ENCODE measurements at regions of chr1 and their contacts with region 1.

Region 1: DNA sequence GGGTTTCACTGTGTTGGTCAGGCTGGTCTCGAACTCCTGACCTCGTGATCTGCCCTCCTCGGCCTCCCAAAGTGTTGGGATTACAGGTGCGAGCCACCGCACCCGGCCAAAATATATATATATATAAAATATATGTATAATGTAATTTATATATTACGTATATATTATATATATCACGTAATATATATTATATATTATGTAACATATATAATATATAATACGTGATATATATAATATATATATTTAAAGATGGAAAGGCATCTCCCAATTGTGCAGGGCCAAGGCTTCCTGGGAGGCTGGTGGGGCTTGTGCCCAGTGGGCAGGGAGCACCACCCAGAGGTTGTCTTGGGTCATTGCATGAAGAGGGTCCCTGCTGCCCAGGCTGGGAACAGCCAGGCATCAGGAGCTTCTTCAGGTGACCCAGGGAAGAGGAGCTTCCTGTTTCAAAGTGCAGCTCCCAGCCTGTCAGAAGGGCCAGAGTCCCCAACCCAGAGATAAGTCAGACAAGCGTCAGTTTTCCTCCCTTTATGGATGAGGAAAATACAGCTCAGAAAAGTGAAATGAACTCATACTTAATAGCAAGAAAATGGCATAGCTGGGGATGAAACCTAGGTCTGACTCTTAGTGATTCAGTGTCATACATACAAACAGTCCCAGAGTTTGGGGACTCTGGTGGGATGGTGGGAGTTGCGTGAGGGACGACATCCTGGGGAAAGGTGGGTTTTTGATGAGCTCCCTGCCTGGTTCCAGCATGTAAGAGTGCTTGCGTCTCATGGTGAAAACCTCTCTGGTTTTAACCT is 12.0 kb downstream of the UBE2Q1 start:
- DNase-seq: no peak
- H3K4me3 ChIP-seq: no peak overlapping the region
- H3K27ac ChIP-seq: peak overlapping the region in 3 of 4 donors; percentile 30 to 53 (median 47)
- H3K4me1 ChIP-seq: peaks cover 5 to 42% (median 13%) of the 10 kb centered on the region in 3 donors
- H3K27me3 ChIP-seq: no peaks in the 10 kb centered on the region
- CTCF ChIP-seq: peak in 5 of 6 experiments; percentile 45 to 70 (median 69)
- POLR2A ChIP-seq: no peak

Region 2: DNA sequence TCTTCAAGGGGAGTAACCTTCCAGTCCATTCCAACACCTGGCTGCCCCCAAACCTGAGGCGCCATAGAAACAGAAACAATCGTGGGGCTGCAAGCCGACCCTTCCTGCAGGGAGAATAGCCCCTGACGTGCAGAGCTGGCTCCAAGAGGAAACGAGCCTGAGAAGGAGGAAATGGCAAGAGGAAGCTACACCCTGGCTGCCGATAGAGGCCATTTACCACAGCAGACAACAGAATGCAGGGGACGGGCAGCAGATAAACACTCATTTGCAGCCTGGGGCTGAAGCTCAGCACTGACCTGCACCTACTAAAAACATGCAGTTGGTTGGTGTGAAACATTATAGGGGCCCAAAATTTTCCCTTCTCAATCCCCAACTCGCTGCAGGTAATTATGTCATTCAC is 53.2 kb before region 1 on chr1:
- intact Hi-C with region 1: loop called (anchors 10 kb)
- DNase-seq: no peak
- H3K4me3 ChIP-seq: peak overlapping the region in 1 of 4 donors; percentile 8
- H3K27ac ChIP-seq: peak overlapping the region in 3 of 4 donors; percentile 32 to 62 (median 54)
- H3K4me1 ChIP-seq: peaks cover 0 to 64% (median 5%) of the 10 kb centered on the region in 3 donors
- H3K27me3 ChIP-seq: peaks cover 0 to 12% (median 0%) of the 10 kb centered on the region in 4 donors
- CTCF ChIP-seq: no peak
- POLR2A ChIP-seq: no peak

Measured in esophagus squamous epithelium (tissue), 5 donors.